ENCODE measurements at regions of chr9 and their contacts with region 1.

Region 1: GRCh38 chr9:19230356-19231125 is at the start of gene DENND4C:
- DNase-seq: peak; percentile 96
- H3K4me3 Mint-ChIP-seq: no peak within 1 kb of the TSS
- H3K27ac Mint-ChIP-seq: peak within 1 kb of the TSS; percentile 85
- H3K4me1 Mint-ChIP-seq: peaks cover 5% of the 10 kb centered on the region
- H3K27me3 Mint-ChIP-seq: peaks cover 3% of the 10 kb centered on the region
- total RNA-seq, gene DENND4C: 13.6 and 16.8 TPM in 2 replicates

Region 2: DNA sequence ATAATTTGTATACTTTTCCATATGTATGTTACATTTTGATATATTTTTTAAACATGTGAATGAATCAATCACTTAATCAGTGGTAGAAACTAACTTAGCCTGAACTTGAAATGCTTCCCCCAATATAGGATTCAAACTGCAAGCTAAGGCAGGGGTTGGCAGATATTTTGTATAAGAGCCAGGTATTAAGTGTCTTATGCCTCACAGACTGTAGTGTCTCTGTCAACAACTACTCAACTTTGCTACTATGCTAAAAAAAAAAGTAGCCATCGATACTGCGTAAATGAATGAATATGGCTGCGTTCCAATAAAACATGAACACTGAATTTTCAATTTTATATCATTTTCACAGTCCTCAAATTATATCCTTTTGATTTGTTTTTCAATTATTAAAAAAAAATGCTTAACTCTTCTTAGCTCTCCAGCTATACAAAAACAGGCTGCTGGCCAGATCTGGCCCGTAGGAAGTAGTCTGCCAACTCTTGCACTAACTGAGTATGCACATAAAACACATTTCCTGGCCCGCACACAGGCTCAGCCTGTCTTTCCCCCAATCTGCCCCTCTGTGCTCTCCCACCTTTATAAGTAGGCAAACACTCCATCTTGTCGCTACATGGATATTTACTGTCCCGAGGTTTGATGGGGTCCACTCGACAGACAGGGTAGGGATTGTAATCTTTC is 289.3 kb before region 1 on chr9:
- intact Hi-C with region 1: no loop called
- DNase-seq: no peak
- H3K4me3 Mint-ChIP-seq: no peak overlapping the region
- H3K27ac Mint-ChIP-seq: no peak overlapping the region
- H3K4me1 Mint-ChIP-seq: no peaks in the 10 kb centered on the region
- H3K27me3 Mint-ChIP-seq: no peaks in the 10 kb centered on the region

Region 3: GRCh38 chr9:19048966-19049916 is 181.3 kb before region 1 on chr9 and contains the start of gene RRAGA:
- intact Hi-C with region 1: loop called (anchors 1 kb)
- DNase-seq: peak; percentile 99
- H3K4me3 Mint-ChIP-seq: peak within 1 kb of the TSS; percentile 95
- H3K27ac Mint-ChIP-seq: peak within 1 kb of the TSS; percentile 99
- H3K4me1 Mint-ChIP-seq: peaks cover 32% of the 10 kb centered on the region
- H3K27me3 Mint-ChIP-seq: no peaks in the 10 kb centered on the region
- total RNA-seq, gene RRAGA: 54.1 and 54.3 TPM in 2 replicates

Region 4: GRCh38 chr9:19127881-19128500 is 102.5 kb before region 1 on chr9:
- intact Hi-C with region 1: loop called (anchors 2 kb)
- DNase-seq: peak; percentile 80
- H3K4me3 Mint-ChIP-seq: peak overlapping the region; percentile 90
- H3K27ac Mint-ChIP-seq: peak overlapping the region; percentile 95
- H3K4me1 Mint-ChIP-seq: peaks cover 46% of the 10 kb centered on the region
- H3K27me3 Mint-ChIP-seq: no peaks in the 10 kb centered on the region

Region 5: GRCh38 chr9:19184144-19184917 is 46.2 kb before region 1 on chr9:
- intact Hi-C with region 1: loop called (anchors 1 kb)
- DNase-seq: peak; percentile 91
- H3K4me3 Mint-ChIP-seq: peak overlapping the region; percentile 75
- H3K27ac Mint-ChIP-seq: peak overlapping the region; percentile 90
- H3K4me1 Mint-ChIP-seq: peaks cover 19% of the 10 kb centered on the region
- H3K27me3 Mint-ChIP-seq: no peaks in the 10 kb centered on the region

Region 6: GRCh38 chr9:19208695-19209137 is 21.8 kb before region 1 on chr9:
- intact Hi-C with region 1: no loop called
- DNase-seq: no peak
- H3K4me3 Mint-ChIP-seq: no peak overlapping the region
- H3K27ac Mint-ChIP-seq: no peak overlapping the region
- H3K4me1 Mint-ChIP-seq: no peaks in the 10 kb centered on the region
- H3K27me3 Mint-ChIP-seq: peaks cover 5% of the 10 kb centered on the region

Region 7: GRCh38 chr9:19379697-19380046 is 149.1 kb after region 1 on chr9:
- intact Hi-C with region 1: loop called (anchors 1 kb)
- DNase-seq: no peak
- H3K4me3 Mint-ChIP-seq: peak overlapping the region; percentile 95
- H3K27ac Mint-ChIP-seq: peak overlapping the region; percentile 95
- H3K4me1 Mint-ChIP-seq: peaks cover 45% of the 10 kb centered on the region
- H3K27me3 Mint-ChIP-seq: no peaks in the 10 kb centered on the region

Region 8: GRCh38 chr9:19828576-19829109 is 598.1 kb after region 1 on chr9:
- intact Hi-C with region 1: no loop called
- DNase-seq: no peak
- H3K4me3 Mint-ChIP-seq: no peak overlapping the region
- H3K27ac Mint-ChIP-seq: no peak overlapping the region
- H3K4me1 Mint-ChIP-seq: no peaks in the 10 kb centered on the region
- H3K27me3 Mint-ChIP-seq: no peaks in the 10 kb centered on the region